A673 (cell line): ENCODE measurements at regions of chr1 and their contacts with region 1.

Region 1: GRCh38 chr1:54950369-54951163 is 29.9 kb upstream of the TMEM61 start:
- DNase-seq: peak; percentile 86
- H3K4me3 ChIP-seq: no peak overlapping the region
- H3K27ac ChIP-seq: no peak overlapping the region
- H3K4me1 ChIP-seq: no peaks in the 10 kb centered on the region
- H3K27me3 ChIP-seq: no peaks in the 10 kb centered on the region
- CTCF ChIP-seq: peak; percentile 84

Region 2: GRCh38 chr1:54980528-54981241 is 30.1 kb after region 1 on chr1 and contains the start of gene TMEM61:
- CTCF ChIA-PET with region 1: no interaction called
- POLR2A ChIA-PET with region 1: no interaction called
- intact Hi-C with region 1: no loop called
- DNase-seq: no peak
- H3K4me3 ChIP-seq: no peak within 1 kb of the TSS
- H3K27ac ChIP-seq: no peak within 1 kb of the TSS
- H3K4me1 ChIP-seq: peaks cover 6% of the 10 kb centered on the region
- H3K27me3 ChIP-seq: peaks cover 6% of the 10 kb centered on the region
- CTCF ChIP-seq: no peak
- total RNA-seq, gene TMEM61: not detected in 2 replicates

Region 3: GRCh38 chr1:54996359-54996868 is 45.8 kb after region 1 on chr1:
- CTCF ChIA-PET with region 1: interaction called, 28 read pairs
- POLR2A ChIA-PET with region 1: no interaction called
- intact Hi-C with region 1: loop called (anchors 1 kb)
- DNase-seq: peak; percentile 88
- H3K4me3 ChIP-seq: no peak overlapping the region
- H3K27ac ChIP-seq: no peak overlapping the region
- H3K4me1 ChIP-seq: peaks cover 8% of the 10 kb centered on the region
- H3K27me3 ChIP-seq: peaks cover 14% of the 10 kb centered on the region
- CTCF ChIP-seq: peak; percentile 92

Region 4: DNA sequence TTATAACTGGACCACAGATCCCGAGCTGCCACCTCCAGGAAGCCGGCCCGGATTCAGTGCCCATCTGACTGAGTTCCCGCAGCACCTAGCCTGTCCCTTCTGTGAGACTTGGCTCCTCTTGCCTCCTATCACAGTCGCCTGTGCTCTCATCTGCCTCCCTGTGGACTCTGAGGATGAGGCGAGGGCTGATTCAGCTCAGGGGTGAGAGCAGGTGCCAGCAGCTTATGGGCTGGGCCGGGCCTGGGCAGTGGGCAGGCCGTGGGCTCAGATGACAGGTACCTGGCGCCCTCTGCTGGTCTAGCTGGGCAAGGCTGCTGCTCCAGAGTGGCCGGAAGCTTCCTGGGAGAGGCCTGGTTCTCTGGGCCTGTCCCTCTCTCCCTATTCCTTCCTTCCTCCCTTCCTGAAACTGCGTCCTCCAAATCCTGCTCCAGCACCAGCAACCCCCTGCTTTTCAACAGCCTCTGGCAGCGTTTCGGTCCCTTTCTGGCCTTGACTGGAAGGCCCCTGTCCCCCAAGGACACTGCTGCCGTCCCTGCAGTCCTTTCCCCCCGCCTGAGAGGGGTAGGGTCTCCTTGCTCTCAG is 71.5 kb after region 1 on chr1:
- CTCF ChIA-PET with region 1: interaction called, 78 read pairs
- POLR2A ChIA-PET with region 1: no interaction called
- intact Hi-C with region 1: loop called (anchors 1 kb)
- DNase-seq: peak; percentile 84
- H3K4me3 ChIP-seq: no peak overlapping the region
- H3K27ac ChIP-seq: no peak overlapping the region
- H3K4me1 ChIP-seq: no peaks in the 10 kb centered on the region
- H3K27me3 ChIP-seq: no peaks in the 10 kb centered on the region
- CTCF ChIP-seq: peak; percentile 97

Region 5: DNA sequence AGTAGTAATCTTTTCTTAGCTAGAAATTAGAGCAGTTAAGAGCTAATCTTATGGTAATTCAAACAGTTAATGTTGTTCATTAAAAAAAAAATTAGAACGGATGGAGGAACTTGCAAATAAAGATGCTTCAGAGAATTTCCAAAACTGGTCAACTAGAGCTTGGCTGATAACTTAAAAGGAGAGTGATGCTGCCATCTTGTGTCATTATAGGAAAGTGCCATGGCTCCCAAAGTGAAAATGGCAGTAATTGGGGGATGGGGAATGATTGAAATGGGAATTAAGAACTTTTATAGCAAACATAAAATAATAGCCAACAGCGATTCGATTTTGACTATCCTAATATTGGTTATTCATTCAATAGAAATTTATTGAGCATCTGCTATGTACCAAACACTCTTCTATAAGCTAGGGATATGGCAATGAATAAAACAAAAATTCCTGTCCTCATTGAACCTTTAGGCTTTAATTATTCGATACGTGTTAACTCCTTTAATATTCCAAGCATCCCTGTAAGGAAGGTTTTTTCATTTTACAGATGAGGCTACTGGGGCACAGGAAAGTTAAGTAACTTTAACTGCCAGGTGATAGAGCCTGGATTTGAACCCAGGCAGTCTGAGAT is 1634.5 kb after region 1 on chr1:
- CTCF ChIA-PET with region 1: no interaction called
- POLR2A ChIA-PET with region 1: no interaction called
- intact Hi-C with region 1: loop called (anchors 10 kb)
- DNase-seq: peak; percentile 65
- H3K4me3 ChIP-seq: no peak overlapping the region
- H3K27ac ChIP-seq: no peak overlapping the region
- H3K4me1 ChIP-seq: peaks cover under 1% of the 10 kb centered on the region
- H3K27me3 ChIP-seq: no peaks in the 10 kb centered on the region
- CTCF ChIP-seq: peak; percentile 80